Gastrocnemius medialis (tissue), 4 donors: ENCODE measurements at regions of chr3 and their contacts with region 1.

Region 1: DNA sequence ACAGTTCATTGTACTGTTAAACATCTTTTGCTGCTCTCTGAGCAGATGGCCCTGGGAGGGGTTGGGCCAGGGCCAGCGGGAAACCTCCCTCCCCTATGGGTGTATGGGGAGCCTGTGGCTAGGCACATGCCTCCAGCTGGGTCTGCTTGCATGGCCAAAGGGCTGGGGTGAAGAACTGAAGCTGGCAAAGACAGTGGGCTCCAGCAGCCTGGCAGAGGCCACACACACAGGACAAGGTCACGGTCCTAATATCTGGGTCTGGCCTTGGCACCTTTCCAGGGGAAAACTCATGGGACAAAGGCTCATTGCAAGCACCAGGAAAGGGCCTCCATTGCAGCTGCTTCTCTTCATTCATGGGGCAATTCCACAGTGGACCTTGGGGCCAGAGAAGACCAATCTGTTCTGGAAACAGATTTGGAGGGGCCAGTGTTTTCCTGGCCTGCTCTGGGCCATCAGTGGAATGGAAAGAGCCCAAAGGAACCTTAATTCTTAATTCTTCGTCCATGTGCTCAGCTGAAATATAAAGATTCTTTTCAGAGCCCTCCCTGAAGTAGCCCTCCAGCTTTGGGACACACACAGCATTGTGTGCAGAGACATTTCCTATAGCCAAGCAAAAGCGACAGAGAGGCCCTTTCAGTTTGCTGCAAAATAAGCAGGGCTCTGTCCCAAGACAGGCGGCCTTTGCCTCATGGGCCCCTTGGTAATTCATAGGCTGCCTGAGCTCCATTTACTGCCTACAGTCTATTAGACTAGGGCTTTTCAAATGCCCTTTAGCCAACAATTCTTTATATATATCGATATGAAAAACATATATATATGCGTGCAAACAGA is 11.3 kb upstream of the LIMD1 start:
- DNase-seq: peak in 1 of 2 donors; percentile 39
- ATAC-seq: peak; percentile 32 to 46
- H3K4me3 ChIP-seq: no peak overlapping the region
- H3K27ac ChIP-seq: peak overlapping the region in 2 of 4 donors; percentile 20 to 32
- H3K4me1 ChIP-seq: peaks cover 22 to 23% of the 10 kb centered on the region in 2 donors
- H3K27me3 ChIP-seq: no peaks in the 10 kb centered on the region
- CTCF ChIP-seq: no peak
- POLR2A ChIP-seq: no peak

Region 2: GRCh38 chr3:45516829-45517228 is 66.4 kb before region 1 on chr3:
- in situ Hi-C with region 1: loop called in 2 of 4 experiments (anchors 10 kb)
- intact Hi-C with region 1: no loop called
- DNase-seq: peak in 1 of 2 donors; percentile 9
- ATAC-seq: peak; percentile 85 to 98
- H3K4me3 ChIP-seq: no peak overlapping the region
- H3K27ac ChIP-seq: peak overlapping the region; percentile 66 to 84 (median 74)
- H3K4me1 ChIP-seq: peaks cover 14% of the 10 kb centered on the region in 2 donors
- H3K27me3 ChIP-seq: no peaks in the 10 kb centered on the region
- CTCF ChIP-seq: no peak
- POLR2A ChIP-seq: no peak

Region 3: DNA sequence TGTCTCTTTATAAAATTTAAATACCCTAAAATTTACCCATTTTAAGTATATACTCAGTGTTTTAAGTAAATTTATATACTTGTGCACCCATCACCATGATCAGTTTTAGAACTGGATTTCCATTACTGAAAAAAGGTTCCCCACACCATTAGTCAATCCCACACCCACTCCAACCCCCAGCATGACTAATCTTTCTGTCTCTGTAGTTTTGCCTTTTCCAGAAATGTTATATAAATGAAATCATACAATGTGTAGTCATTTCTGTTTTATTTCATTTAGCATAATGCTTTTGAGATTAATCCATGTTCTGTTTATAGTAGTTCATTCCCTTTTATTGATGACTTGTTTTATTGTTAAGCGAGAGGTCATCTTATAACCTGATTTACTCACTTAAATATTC is 54.8 kb before region 1 on chr3:
- in situ Hi-C with region 1: no loop called
- intact Hi-C with region 1: no loop called
- DNase-seq: no peak
- ATAC-seq: no peak
- H3K4me3 ChIP-seq: no peak overlapping the region
- H3K27ac ChIP-seq: no peak overlapping the region
- H3K4me1 ChIP-seq: peaks cover 4% of the 10 kb centered on the region in 2 donors
- H3K27me3 ChIP-seq: no peaks in the 10 kb centered on the region
- CTCF ChIP-seq: no peak
- POLR2A ChIP-seq: no peak